IMR-90 (cell line): ENCODE measurements at regions of chr16 and their contacts with region 1.

Region 1: GRCh38 chr16:11585460-11586377 is 1.0 kb downstream of the LITAF start:
- DNase-seq: peak; percentile 33
- ATAC-seq: peak; percentile 15; the same call in 1 of the 2 replicates
- H3K4me3 ChIP-seq: peak overlapping the region; percentile 93
- H3K27ac ChIP-seq: peak overlapping the region; percentile 63
- H3K4me1 ChIP-seq: peaks cover 16% of the 10 kb centered on the region
- H3K27me3 ChIP-seq: no peaks in the 10 kb centered on the region
- CTCF ChIP-seq: no peak
- POLR2A ChIP-seq: no peak
- RAD21 ChIP-seq: no peak

Region 2: GRCh38 chr16:11546608-11547061 is 39.1 kb before region 1 on chr16:
- CTCF ChIA-PET with region 1: interaction called, 3 read pairs
- POLR2A ChIA-PET with region 1: no interaction called
- dilution Hi-C with region 1: no loop called
- in situ Hi-C with region 1: no loop called
- intact Hi-C with region 1: loop called (anchors 5 kb)
- DNase-seq: peak; percentile 85
- ATAC-seq: peak; percentile 92
- H3K4me3 ChIP-seq: no peak overlapping the region
- H3K27ac ChIP-seq: peak overlapping the region; percentile 59; the same call in 1 of the 2 replicates
- H3K4me1 ChIP-seq: peaks cover 8% of the 10 kb centered on the region
- H3K27me3 ChIP-seq: no peaks in the 10 kb centered on the region
- CTCF ChIP-seq: no peak
- POLR2A ChIP-seq: no peak
- RAD21 ChIP-seq: no peak